ENCODE measurements at regions of chr10 and their contacts with region 1.

Region 1: GRCh38 chr10:95601116-95601719 is 40.0 kb upstream of the SORBS1 start:
- DNase-seq: peak; percentile 86

Region 2: DNA sequence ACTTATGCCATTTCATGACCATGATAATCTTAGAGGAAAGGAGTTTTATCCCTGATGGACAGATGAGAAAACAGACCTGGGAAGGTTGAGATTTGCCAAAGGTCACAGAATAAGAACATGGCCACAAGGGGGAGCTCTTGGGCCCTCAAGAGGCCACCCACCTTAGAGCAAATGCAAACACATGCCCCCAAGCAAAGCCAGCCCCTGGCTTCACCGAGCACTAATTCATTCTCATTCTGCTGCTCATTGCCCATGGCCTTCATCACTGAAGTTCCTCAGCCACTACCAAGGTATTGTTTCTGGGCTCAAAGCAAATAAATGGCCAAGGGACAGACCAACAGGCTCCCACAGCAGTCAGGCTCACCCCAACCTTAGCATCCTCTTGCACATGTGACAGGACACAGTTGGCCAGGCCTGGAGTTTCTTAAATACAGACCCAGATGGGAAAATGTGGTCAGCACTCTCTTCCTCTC is 354.6 kb before region 1 on chr10:
- intact Hi-C with region 1: loop called (anchors 10 kb)
- DNase-seq: no peak

Region 3: DNA sequence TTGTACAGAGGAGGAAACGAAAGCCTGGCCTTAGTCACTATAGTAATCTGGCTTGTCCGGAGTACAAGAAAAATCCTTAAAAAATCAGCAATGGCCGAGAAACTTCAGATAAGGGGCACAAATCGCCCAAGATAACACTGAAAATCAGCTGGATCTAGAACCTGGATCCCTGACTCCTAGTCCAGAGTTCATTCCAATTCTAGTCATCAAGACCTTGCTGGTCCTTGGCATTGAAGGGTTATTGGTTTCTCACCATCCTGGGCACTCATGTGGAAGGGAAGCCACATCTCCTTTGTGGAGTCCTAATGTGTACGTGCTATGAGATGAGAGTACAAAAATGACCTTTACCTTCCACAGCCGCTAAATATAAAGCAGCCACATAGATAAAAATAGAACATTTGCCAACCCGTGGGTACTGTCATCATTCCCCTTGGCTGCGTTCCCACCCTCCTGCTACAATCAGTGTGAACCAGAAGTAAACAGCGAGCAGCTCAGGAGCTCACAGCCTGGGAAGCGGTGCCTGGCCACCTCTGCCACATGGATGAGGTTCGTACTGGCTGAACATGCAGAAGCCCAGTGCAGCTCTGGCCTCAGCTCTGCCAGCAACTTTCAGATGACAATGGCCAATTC is 194.5 kb before region 1 on chr10:
- intact Hi-C with region 1: no loop called
- DNase-seq: peak; percentile 91

Region 4: DNA sequence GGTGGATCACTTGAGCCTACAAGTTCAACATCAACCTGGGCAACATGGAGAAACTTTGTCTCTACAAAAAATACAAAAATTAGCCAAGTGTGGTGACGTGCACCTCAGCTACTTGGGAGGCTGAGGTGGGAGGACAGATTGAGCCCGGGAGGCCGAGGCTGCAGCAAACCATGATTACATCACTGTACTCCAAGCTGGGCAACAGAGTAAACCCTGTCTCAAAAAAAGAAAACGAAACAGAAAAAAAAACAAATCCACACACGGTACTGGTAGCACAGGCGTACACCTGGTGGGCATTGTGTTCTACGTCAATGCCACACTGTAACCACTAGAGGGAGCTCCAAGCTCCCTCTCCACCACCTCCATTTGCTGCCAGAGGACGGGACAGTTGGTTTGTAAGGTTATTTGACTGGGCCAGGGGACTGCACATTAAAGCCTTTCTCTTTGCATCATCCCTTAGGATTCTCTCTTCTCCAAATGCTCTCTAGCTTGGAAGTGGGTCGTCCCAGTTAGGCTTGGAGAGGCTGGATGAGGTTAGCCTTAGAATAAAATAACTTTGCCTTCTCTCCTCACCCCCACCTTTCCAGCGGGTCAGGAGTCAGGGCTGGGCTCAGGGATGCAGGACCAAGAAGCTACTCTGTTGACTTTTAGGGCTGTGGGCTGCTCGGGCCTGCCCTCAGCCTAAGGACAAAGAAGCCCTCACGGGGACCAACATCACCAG is 170.8 kb before region 1 on chr10:
- intact Hi-C with region 1: loop called (anchors 1 kb)
- DNase-seq: no peak

Region 5: DNA sequence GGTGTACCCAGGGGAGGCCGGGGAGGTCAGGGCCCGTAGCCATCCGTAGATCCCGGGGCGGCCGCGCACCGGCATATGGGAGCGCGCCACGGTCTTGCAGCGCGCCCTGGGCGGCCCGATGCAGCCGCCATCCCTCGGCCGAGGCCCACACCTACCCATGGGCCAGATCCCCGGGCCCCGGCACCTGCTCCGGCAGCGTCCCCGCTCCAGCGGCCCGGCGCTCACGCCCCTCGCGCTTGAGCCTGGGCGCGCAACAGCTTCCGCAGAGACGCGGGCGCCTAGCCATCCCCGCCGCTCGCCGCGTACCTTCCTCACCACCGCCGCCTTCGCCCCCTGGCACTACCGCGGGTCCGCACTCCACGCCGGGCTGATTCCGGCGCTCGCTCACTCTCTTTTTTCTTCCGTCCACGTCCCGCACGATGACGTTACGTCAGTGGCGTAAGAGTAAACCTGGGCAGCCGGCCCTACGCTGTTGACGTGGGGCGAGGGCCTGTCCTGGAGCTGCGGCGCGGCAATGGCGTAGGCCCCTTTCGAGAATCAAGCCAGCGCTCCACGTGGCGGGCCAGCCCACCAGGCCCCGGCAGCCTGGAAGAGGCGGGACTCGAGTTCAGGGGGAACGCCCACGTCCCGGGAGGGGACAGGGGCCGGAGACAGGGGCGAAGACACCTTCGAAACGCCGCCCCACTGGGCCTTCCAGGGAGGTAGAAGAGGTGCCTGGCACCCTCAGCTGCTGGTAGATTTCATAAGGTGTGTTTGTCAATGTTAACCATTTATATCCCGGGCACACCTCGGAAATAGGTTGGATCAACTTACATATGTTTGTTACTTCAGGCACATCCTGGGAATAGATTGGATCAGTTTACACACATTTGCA is 55.3 kb after region 1 on chr10 and contains the start of gene ALDH18A1:
- intact Hi-C with region 1: no loop called
- DNase-seq: peak; percentile 95
- total RNA-seq, gene ALDH18A1: 19.8 TPM

Measured in cardiac septum (tissue), 1 donor.